ENCODE measurements at regions of chr6 and their contacts with region 1.

Region 1: GRCh38 chr6:70599187-70599586 is 32.5 kb downstream of the SDHAF4 start:
- DNase-seq: peak; percentile 43
- ATAC-seq: peak; percentile 97
- H3K4me3 Mint-ChIP-seq: peak overlapping the region; percentile 46
- H3K27ac Mint-ChIP-seq: peak overlapping the region; percentile 43
- H3K4me1 Mint-ChIP-seq: peaks cover 18% of the 10 kb centered on the region
- H3K27me3 Mint-ChIP-seq: no peaks in the 10 kb centered on the region

Region 2: DNA sequence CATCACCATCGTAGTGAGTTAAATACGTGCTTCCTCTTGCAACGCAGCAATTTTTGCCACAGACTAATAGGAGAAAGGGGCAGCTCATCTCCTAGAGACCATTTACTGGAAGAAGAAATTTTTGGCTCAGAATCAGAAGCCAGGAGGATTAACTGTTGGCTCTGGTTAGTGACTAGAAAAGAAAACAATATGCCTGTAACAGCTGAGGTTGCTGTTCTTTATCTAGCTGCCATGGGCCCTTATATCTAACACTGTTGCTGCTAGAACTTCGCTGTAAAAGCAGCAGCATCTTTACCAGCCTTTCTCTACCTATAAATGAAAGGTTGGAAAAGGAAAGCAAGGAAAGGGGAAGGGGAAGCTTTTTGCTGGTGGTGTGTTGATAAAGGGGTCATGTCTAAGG is 120.0 kb before region 1 on chr6:
- POLR2A ChIA-PET with region 1: no interaction called
- DNase-seq: no peak
- ATAC-seq: no peak
- H3K4me3 Mint-ChIP-seq: no peak overlapping the region
- H3K27ac Mint-ChIP-seq: no peak overlapping the region
- H3K4me1 Mint-ChIP-seq: no peaks in the 10 kb centered on the region
- H3K27me3 Mint-ChIP-seq: no peaks in the 10 kb centered on the region

Region 3: DNA sequence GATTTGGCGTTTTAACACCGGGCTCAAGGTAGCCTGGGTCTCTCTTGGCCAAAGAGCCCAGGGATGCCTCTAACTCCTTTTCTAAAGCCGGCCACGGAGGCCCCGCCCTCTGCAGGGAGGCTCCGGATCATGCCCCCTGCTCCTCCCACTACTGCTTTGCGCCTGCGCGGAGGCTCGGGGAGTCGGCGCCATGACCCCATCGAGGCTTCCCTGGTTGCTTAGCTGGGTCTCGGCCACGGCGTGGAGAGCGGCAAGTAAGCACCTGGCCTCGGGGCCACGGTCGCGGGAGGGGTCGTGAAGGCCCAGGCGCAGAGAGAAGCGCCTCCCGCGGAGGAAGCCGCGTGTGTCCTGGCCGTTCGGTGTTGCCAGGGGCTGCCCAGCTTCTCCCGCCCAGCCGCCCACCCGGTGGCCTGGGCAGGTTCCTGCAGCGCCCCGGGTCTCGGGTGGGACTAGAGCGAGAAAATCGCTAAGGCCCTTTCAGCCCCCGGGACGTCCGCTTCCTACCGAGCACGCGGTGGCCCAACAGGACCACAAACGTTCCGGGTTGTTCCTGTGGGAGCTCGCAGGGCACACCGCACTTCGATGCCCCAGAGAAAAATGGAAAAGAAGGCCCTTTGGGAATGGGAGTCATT is 32.3 kb before region 1 on chr6 and contains the start of gene SDHAF4:
- POLR2A ChIA-PET with region 1: interaction called, 11 read pairs
- DNase-seq: peak; percentile 96
- ATAC-seq: peak; percentile 100
- H3K4me3 Mint-ChIP-seq: peak within 1 kb of the TSS; percentile 89
- H3K27ac Mint-ChIP-seq: peak within 1 kb of the TSS; percentile 83
- H3K4me1 Mint-ChIP-seq: peaks cover 10% of the 10 kb centered on the region
- H3K27me3 Mint-ChIP-seq: no peaks in the 10 kb centered on the region
- total RNA-seq, gene SDHAF4: 13.9 to 15.9 TPM